ENCODE measurements at regions of chr1 and their contacts with region 1.

Region 1: DNA sequence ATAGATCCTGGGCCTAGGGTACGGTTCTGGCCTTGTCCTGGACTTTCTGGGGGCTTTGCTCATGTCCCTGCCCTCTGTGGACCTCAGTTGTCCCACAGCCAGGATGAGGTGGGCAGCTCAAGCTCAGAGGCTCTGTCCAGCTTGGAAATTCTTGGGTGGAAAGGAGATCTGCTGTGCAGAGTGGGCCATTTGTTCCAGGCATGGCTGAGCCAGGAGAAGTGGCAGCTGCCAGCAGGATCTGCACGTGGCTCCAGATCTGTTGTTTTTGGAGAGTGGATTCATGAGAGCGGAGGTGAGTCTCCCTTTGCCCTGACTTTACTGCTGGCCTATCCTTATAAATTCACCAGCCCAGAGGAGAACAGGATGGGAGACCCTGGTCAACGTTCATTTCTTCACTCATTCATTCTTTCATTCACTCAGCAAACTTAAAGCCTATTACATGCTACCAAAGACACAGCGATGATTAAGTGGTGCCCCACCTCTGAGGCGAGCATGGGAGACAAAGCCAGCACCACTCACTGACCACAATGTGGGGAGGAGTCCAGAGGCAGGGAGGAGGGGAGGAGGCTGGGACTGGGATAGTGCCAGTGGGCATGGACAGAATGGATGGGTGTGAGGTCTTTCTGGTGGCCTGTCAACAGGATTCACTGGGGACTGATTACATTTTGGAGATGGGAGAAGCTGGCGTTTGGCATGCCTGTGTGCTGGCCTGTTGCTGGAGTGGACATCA is 205.1 kb downstream of the TRABD2B start:
- H3K4me3 ChIP-seq: no peak overlapping the region
- H3K27ac ChIP-seq: no peak overlapping the region
- H3K4me1 ChIP-seq: no peaks in the 10 kb centered on the region
- CTCF ChIP-seq: no peak

Region 2: GRCh38 chr1:48048064-48048463 is 256.0 kb after region 1 on chr1:
- CTCF ChIA-PET with region 1: interaction called, 11 read pairs
- POLR2A ChIA-PET with region 1: no interaction called
- H3K4me3 ChIP-seq: no peak overlapping the region
- H3K27ac ChIP-seq: no peak overlapping the region
- H3K4me1 ChIP-seq: peaks cover 15% of the 10 kb centered on the region
- CTCF ChIP-seq: no peak

Measured in HEK293 (cell line).